MCF 10A (cell line): ENCODE measurements at regions of chr16 and their contacts with region 1.

Region 1: GRCh38 chr16:23556881-23557778 is at the starts of genes EARS2 and UBFD1:
- DNase-seq: peak; percentile 98
- H3K4me3 Mint-ChIP-seq: peak within 1 kb of the TSS; percentile 96
- H3K27ac Mint-ChIP-seq: peak within 1 kb of the TSS; percentile 88
- H3K4me1 Mint-ChIP-seq: peaks cover 10% of the 10 kb centered on the region
- H3K27me3 Mint-ChIP-seq: no peaks in the 10 kb centered on the region
- CTCF ChIP-seq: peak; percentile 87
- total RNA-seq, gene EARS2: 24.4 and 32.8 TPM in 2 replicates
- total RNA-seq, gene UBFD1: 49.1 and 50.8 TPM in 2 replicates

Region 2: GRCh38 chr16:23452572-23453337 is 104.4 kb before region 1 on chr16 and contains the start of gene COG7:
- CTCF ChIA-PET with region 1: no interaction called
- POLR2A ChIA-PET with region 1: interaction called, 3 read pairs
- intact Hi-C with region 1: loop called (anchors 2 kb)
- DNase-seq: peak; percentile 82
- H3K4me3 Mint-ChIP-seq: peak within 1 kb of the TSS; percentile 90
- H3K27ac Mint-ChIP-seq: peak within 1 kb of the TSS; percentile 89
- H3K4me1 Mint-ChIP-seq: peaks cover 14% of the 10 kb centered on the region
- H3K27me3 Mint-ChIP-seq: no peaks in the 10 kb centered on the region
- CTCF ChIP-seq: no peak
- total RNA-seq, gene COG7: 10.0 and 16.7 TPM in 2 replicates

Region 3: DNA sequence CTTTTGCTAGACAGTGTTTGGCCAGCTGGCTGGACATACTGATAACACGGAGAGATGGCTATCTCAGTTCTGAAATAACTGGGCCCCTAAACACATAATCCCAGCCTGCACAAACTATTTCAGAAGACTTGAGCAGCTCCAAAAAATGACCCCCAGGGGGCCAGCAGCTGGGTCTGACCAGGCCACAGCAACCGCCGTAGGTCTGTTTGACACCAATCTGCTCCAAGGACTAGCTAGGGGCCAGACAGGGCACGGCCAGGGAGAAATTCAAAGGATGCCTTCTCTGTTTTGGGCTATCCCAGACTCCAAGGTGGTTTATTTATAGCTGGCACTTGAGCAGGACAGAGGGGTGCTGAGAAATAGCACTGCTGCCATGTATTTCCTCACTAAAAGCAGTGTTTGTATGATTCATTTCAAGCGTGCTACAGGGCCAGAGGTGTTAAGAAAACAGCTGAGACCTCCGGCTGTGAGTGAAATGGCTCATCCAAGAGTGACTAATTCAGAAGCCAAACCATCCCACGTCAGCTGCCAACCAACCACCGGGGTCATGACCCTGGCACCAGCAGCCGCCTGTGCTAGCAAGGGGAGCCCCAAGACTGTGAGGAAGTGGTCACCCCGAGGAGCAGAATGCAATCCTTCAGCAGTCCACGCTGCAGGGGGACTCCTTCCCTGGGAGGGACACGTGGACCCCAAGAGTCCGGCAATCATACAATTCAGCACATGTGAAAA is 52.5 kb before region 1 on chr16:
- CTCF ChIA-PET with region 1: interaction called, 4 read pairs
- POLR2A ChIA-PET with region 1: interaction called, 20 read pairs
- intact Hi-C with region 1: loop called (anchors 2 kb)
- DNase-seq: peak; percentile 98
- H3K4me3 Mint-ChIP-seq: no peak overlapping the region
- H3K27ac Mint-ChIP-seq: peak overlapping the region; percentile 75
- H3K4me1 Mint-ChIP-seq: peaks cover 41% of the 10 kb centered on the region
- H3K27me3 Mint-ChIP-seq: no peaks in the 10 kb centered on the region
- CTCF ChIP-seq: no peak

Region 4: DNA sequence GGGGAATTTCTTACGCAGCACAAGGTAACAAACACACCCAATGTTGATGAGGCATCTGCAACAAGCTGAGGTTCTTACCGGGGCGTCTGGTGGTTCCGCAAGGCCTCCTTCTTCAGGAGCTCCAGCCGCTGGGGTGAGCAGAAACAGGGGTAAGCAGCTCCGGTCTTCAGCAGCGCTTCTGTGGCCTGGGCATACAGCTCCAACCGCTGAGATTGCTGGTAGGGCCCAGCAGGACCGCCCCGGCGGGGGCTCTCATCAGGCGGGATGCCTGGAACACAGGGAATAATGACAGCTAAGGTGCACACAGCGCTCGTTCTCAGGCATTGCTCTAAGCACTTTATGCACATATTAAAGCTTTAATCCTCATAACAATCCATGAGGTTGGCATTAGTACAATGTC is 12.7 kb before region 1 on chr16:
- CTCF ChIA-PET with region 1: interaction called, 8 read pairs
- POLR2A ChIA-PET with region 1: interaction called, 10 read pairs
- intact Hi-C with region 1: no loop called
- DNase-seq: no peak
- H3K4me3 Mint-ChIP-seq: no peak overlapping the region
- H3K27ac Mint-ChIP-seq: no peak overlapping the region
- H3K4me1 Mint-ChIP-seq: no peaks in the 10 kb centered on the region
- H3K27me3 Mint-ChIP-seq: no peaks in the 10 kb centered on the region
- CTCF ChIP-seq: no peak

Region 5: GRCh38 chr16:23640931-23641765 is 84.0 kb after region 1 on chr16 and contains the starts of genes DCTN5 and PALB2:
- CTCF ChIA-PET with region 1: no interaction called
- POLR2A ChIA-PET with region 1: interaction called, 24 read pairs
- intact Hi-C with region 1: no loop called
- DNase-seq: peak; percentile 95
- H3K4me3 Mint-ChIP-seq: peak within 1 kb of the TSS; percentile 91
- H3K27ac Mint-ChIP-seq: peak within 1 kb of the TSS; percentile 91
- H3K4me1 Mint-ChIP-seq: peaks cover 12% of the 10 kb centered on the region
- H3K27me3 Mint-ChIP-seq: no peaks in the 10 kb centered on the region
- CTCF ChIP-seq: no peak
- total RNA-seq, gene DCTN5: 66.6 and 84.8 TPM in 2 replicates
- total RNA-seq, gene PALB2: 13.7 and 20.8 TPM in 2 replicates